PC-9 (cell line): ENCODE measurements at regions of chr10 and their contacts with region 1.

Region 1: GRCh38 chr10:112949875-112950507 is at the start of gene TCF7L2:
- DNase-seq: peak; percentile 90
- H3K4me3 ChIP-seq: peak within 1 kb of the TSS; percentile 75
- H3K27ac ChIP-seq: peak within 1 kb of the TSS; percentile 69
- H3K4me1 ChIP-seq: peaks cover 27% of the 10 kb centered on the region
- H3K27me3 ChIP-seq: no peaks in the 10 kb centered on the region
- CTCF ChIP-seq: no peak
- total RNA-seq, gene TCF7L2: 9.9 and 14.8 TPM in 2 replicates

Region 2: DNA sequence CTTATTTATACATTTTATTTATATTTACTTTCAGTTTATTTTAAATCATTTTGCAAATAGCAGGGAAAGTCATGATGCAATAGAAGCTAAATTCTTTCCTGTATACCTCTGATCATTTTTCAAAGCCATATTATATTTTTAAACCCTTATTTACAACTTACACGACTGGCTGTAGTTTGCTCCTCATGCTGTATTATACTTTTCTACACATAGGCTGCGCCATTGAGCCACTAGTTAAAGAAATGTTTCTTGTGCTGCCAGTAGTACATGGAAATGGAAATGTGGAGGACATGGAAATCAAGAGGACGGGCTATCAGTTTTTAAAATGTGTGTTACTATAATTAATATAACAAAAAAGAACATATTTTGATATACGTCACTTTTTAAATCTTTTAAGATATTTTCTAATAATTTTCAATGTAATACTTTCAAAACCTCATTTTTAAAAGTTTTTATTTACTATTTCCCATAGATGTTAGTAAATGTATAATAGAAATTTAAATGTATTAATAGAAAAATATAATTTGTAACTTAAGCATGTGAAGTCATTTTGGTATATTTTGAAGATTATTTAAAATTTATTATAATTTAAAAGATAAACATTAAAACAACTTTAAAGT is 384.4 kb before region 1 on chr10:
- CTCF ChIA-PET with region 1: no interaction called
- POLR2A ChIA-PET with region 1: no interaction called
- intact Hi-C with region 1: loop called (anchors 10 kb)
- DNase-seq: peak; percentile 20 to 56
- H3K4me3 ChIP-seq: no peak overlapping the region
- H3K27ac ChIP-seq: no peak overlapping the region
- H3K4me1 ChIP-seq: no peaks in the 10 kb centered on the region
- H3K27me3 ChIP-seq: no peaks in the 10 kb centered on the region
- CTCF ChIP-seq: peak; percentile 73

Region 3: DNA sequence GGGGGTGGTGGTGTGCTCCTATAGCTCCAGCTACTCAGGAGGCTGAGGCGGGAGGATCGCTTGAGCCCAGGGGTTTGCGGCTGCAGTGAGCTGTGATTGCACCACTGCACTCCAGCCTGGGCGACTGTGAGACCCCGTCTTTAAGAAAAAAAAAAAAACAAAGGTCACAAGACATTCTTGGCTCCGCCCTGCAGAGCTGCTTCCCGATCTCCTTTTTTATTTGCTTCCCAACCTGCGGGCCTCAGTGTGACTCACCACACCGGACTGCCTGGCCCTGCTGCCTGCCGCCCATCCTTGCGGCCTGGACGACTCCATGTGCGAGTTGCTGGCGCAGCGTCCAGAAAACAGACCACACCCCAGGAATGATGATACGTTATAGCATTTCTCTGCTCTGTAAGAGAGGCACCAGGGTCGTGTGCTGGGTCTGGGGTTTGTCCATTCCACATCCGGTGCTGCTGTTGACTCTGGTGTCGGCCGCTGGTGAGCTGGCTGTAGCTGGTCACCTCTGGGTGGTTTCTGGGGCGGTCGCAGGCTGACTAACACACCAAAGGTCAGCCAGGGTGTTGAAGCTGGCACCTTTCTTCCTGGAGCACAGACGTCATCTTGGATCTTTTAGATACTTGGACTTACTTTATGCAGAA is 123.7 kb after region 1 on chr10:
- CTCF ChIA-PET with region 1: no interaction called
- POLR2A ChIA-PET with region 1: no interaction called
- intact Hi-C with region 1: loop called (anchors 2 kb)
- DNase-seq: peak; percentile 89 to 96
- H3K4me3 ChIP-seq: peak overlapping the region; percentile 28; the same call in 1 of the 2 replicates
- H3K27ac ChIP-seq: peak overlapping the region; percentile 84
- H3K4me1 ChIP-seq: peaks cover 27% of the 10 kb centered on the region
- H3K27me3 ChIP-seq: no peaks in the 10 kb centered on the region
- CTCF ChIP-seq: no peak

Region 4: GRCh38 chr10:113103131-113103840 is 153.3 kb after region 1 on chr10:
- CTCF ChIA-PET with region 1: no interaction called
- POLR2A ChIA-PET with region 1: interaction called, 11 read pairs
- intact Hi-C with region 1: no loop called
- DNase-seq: no peak
- H3K4me3 ChIP-seq: no peak overlapping the region
- H3K27ac ChIP-seq: no peak overlapping the region
- H3K4me1 ChIP-seq: no peaks in the 10 kb centered on the region
- H3K27me3 ChIP-seq: no peaks in the 10 kb centered on the region
- CTCF ChIP-seq: no peak

Region 5: GRCh38 chr10:113385021-113385999 is 435.3 kb after region 1 on chr10:
- CTCF ChIA-PET with region 1: no interaction called
- POLR2A ChIA-PET with region 1: no interaction called
- intact Hi-C with region 1: loop called (anchors 5 kb)
- DNase-seq: peak; percentile 50 to 61
- H3K4me3 ChIP-seq: no peak overlapping the region
- H3K27ac ChIP-seq: no peak overlapping the region
- H3K4me1 ChIP-seq: 0 out of 2 replicates have a peak, but pooled peaks cover 14% of the 10 kb centered on the region
- H3K27me3 ChIP-seq: no peaks in the 10 kb centered on the region
- CTCF ChIP-seq: peak; percentile 78